Sigmoid colon (tissue), 7 donors: ENCODE measurements at regions of chr1 and their contacts with region 1.

Region 1: GRCh38 chr1:17011439-17012307 is at the start of gene ATP13A2:
- DNase-seq: peak; percentile 85
- H3K4me3 ChIP-seq: peak within 1 kb of the TSS; percentile 49 to 95 (median 82)
- H3K27ac ChIP-seq: peak within 1 kb of the TSS in 3 of 4 donors; percentile 42 to 65 (median 46)
- H3K4me1 ChIP-seq: peaks cover 0 to 25% (median 21%) of the 10 kb centered on the region in 4 donors
- H3K27me3 ChIP-seq: no peaks in the 10 kb centered on the region
- CTCF ChIP-seq: no peak
- EP300 ChIP-seq: no peak
- POLR2A ChIP-seq: no peak
- total RNA-seq, gene ATP13A2: 8.7 to 23.8 (median 15.7) TPM

Region 2: DNA sequence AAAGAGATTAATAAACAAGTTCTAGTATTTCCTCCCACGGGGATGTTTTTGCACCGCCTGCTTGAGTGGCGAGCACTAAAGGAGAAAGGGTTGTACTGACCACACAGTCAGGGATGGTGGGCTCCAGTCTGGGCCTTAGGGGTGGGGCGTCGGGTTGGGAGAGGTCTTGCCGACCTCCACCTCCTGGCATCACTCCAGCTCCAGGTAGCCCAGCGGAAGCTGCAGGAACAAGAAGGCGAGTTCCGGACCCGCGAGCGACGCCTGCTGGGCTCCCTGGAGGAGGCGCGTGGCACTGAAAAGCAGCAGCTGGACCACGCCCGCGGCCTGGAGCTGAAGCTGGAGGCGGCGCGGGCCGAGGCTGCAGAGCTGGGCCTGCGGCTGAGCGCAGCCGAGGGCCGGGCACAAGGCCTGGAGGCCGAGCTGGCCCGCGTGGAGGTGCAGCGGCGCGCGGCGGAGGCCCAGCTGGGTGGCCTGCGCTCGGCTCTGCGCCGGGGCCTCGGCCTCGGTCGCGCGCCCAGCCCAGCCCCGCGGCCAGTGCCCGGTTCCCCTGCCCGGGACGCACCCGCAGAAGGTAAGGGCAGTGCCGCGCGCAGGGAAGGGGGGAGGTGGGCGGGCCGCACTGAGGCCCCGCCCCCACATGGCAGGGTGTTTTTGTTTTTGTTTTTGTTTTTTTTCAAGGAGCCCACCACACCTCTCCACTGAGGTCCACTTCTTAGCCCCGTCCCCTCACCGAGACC is 50.9 kb before region 1 on chr1:
- intact Hi-C with region 1: loop called (anchors 5 kb)
- DNase-seq: peak; percentile 90
- H3K4me3 ChIP-seq: peak overlapping the region in 3 of 4 donors; percentile 35 to 50 (median 41)
- H3K27ac ChIP-seq: peak overlapping the region; percentile 51 to 65 (median 61)
- H3K4me1 ChIP-seq: peaks cover 0 to 31% (median 13%) of the 10 kb centered on the region in 4 donors
- H3K27me3 ChIP-seq: no peaks in the 10 kb centered on the region
- CTCF ChIP-seq: peak; percentile 55 to 73 (median 70)
- EP300 ChIP-seq: no peak
- POLR2A ChIP-seq: no peak

Region 3: DNA sequence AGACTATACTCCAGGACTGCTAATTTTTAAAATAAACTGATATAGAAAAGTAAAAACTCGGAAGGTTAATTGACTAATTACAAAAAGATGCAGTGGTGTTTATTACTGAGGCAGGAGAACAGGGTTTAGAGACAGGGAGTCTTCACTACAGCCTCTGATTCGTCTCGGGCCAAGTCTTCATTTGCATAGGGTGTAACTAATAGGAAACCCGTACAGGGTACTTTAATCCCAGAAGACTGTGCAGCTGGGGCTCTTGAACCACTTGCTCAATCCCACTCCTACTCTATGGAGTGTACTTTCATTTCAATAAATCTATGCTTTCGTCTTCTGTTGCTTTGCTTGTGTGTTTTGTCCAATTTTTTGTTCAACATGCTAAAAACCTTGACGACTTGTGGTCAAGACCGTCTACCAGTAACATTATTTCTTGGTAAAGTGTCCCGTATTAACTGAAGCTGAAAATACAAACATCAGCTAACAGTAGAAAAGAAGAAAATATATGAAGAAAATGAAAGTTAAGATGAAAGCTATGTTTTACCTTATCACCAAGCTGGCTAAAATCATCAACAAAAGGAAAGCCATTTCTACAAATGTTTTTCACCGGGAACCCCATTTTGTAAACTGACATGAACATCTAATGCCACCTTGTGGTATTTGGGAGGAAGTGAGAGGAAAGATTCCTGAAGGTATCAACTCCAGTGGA is 34.1 kb after region 1 on chr1:
- intact Hi-C with region 1: loop called (anchors 5 kb)
- DNase-seq: no peak
- H3K4me3 ChIP-seq: peak overlapping the region in 3 of 4 donors; percentile 13 to 22 (median 16)
- H3K27ac ChIP-seq: peak overlapping the region; percentile 18 to 54 (median 34)
- H3K4me1 ChIP-seq: peaks cover 0 to 11% (median 6%) of the 10 kb centered on the region in 4 donors
- H3K27me3 ChIP-seq: no peaks in the 10 kb centered on the region
- CTCF ChIP-seq: peak; percentile 58 to 79 (median 72)
- EP300 ChIP-seq: no peak
- POLR2A ChIP-seq: no peak